Naive thymus-derived CD8-positive, alpha-beta T cell (primary cell): ENCODE measurements at regions of chrX and their contacts with region 1.

Region 1: GRCh38 chrX:151396825-151397740 is at the start of gene VMA21:
- DNase-seq: peak; percentile 71 to 91 (median 77)
- ATAC-seq: peak; percentile 73 to 77
- H3K4me3 Mint-ChIP-seq: peak within 1 kb of the TSS; percentile 70 to 92 (median 90)
- H3K27ac Mint-ChIP-seq: peak within 1 kb of the TSS; percentile 93 to 99 (median 98)
- H3K4me1 Mint-ChIP-seq: peaks cover 27 to 68% (median 60%) of the 10 kb centered on the region in 4 donors
- H3K27me3 Mint-ChIP-seq: no peaks in the 10 kb centered on the region
- polyA plus RNA-seq, gene VMA21: 32.4 to 37.0 (median 36.6) TPM

Region 2: GRCh38 chrX:151346931-151347543 is 50.0 kb before region 1 on chrX:
- POLR2A ChIA-PET with region 1: no interaction called
- DNase-seq: no peak
- ATAC-seq: no peak
- H3K4me3 Mint-ChIP-seq: no peak overlapping the region
- H3K27ac Mint-ChIP-seq: no peak overlapping the region
- H3K4me1 Mint-ChIP-seq: no peaks in the 10 kb centered on the region
- H3K27me3 Mint-ChIP-seq: peaks cover 1 to 14% (median 11%) of the 10 kb centered on the region in 5 donors

Region 3: DNA sequence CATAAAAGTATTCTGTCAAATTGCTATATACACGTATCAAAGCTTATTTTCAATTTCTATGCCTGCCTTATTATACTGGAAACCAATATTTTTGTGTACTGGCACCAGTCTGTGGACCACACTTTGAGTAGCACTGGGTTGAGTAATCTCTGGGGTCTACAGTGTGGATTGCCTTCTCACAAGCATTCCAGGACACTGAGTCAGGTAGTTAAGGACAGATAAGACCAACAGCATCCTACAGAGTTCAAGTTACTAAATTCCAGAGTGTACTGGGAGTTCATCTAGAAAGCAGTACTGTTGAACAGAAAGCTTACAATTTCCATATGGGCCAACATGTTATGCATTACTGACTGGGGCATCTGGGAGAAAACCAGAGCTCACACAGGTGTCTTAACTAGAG is 61.7 kb after region 1 on chrX:
- POLR2A ChIA-PET with region 1: interaction called, 10 read pairs
- DNase-seq: no peak
- ATAC-seq: no peak
- H3K4me3 Mint-ChIP-seq: no peak overlapping the region
- H3K27ac Mint-ChIP-seq: no peak overlapping the region
- H3K4me1 Mint-ChIP-seq: no peaks in the 10 kb centered on the region
- H3K27me3 Mint-ChIP-seq: no peaks in the 10 kb centered on the region